HEK293 (cell line): ENCODE measurements at regions of chr2 and their contacts with region 1.

Region 1: GRCh38 chr2:182980115-182980514 is 58.1 kb downstream of the NCKAP1 start:
- H3K4me3 ChIP-seq: no peak overlapping the region
- H3K27ac ChIP-seq: no peak overlapping the region
- H3K4me1 ChIP-seq: no peaks in the 10 kb centered on the region
- CTCF ChIP-seq: peak; percentile 36; the same call in 1 of the 2 replicates

Region 2: GRCh38 chr2:182763311-182763912 is 216.7 kb before region 1 on chr2:
- CTCF ChIA-PET with region 1: interaction called, 52 read pairs
- POLR2A ChIA-PET with region 1: interaction called, 3 read pairs
- H3K4me3 ChIP-seq: no peak overlapping the region
- H3K27ac ChIP-seq: no peak overlapping the region
- H3K4me1 ChIP-seq: no peaks in the 10 kb centered on the region
- CTCF ChIP-seq: peak; percentile 51; the same call in 1 of the 2 replicates

Region 3: DNA sequence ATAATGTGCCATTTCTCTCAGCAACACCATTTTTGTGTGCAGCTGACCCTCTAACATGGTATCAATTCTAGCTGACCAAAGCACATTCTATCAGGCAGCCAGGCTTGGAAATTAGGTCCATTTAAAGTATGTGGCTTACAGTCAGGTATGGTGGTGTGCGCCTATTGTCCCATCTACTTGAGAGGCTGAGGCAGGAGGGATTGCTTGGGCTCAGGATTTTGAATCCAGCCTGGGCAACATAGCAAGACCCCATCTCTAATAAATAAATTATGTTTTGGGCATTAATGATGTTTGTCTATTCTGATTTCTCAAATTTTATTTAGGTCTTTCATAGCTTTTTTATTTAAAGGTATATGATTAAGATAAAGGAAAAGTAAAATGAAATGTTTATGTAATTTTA is 200.8 kb before region 1 on chr2:
- CTCF ChIA-PET with region 1: interaction called, 50 read pairs
- POLR2A ChIA-PET with region 1: no interaction called
- H3K4me3 ChIP-seq: no peak overlapping the region
- H3K27ac ChIP-seq: no peak overlapping the region
- H3K4me1 ChIP-seq: no peaks in the 10 kb centered on the region
- CTCF ChIP-seq: no peak

Region 4: DNA sequence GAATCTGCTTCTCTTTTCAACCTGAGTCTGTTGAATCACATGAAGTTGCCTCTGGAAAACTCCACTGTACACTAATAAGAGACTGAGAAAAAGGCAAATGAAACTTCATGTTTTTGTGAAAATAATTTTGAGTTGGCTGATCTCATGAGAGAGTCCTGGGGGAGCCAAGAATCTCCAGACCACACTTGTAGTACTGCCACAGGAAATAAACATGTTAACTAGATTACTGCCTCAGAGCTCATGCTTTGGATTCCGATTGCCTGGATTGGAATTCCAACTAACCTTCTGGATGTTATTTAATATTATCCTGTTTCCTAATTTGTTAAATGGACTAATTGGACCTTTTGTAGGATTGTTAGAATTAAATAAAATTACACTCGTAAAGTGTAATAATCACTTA is 169.4 kb after region 1 on chr2:
- CTCF ChIA-PET with region 1: no interaction called
- POLR2A ChIA-PET with region 1: no interaction called
- H3K4me3 ChIP-seq: no peak overlapping the region
- H3K27ac ChIP-seq: no peak overlapping the region
- H3K4me1 ChIP-seq: no peaks in the 10 kb centered on the region
- CTCF ChIP-seq: no peak